ENCODE measurements at regions of chr16 and their contacts with region 1.

Region 1: DNA sequence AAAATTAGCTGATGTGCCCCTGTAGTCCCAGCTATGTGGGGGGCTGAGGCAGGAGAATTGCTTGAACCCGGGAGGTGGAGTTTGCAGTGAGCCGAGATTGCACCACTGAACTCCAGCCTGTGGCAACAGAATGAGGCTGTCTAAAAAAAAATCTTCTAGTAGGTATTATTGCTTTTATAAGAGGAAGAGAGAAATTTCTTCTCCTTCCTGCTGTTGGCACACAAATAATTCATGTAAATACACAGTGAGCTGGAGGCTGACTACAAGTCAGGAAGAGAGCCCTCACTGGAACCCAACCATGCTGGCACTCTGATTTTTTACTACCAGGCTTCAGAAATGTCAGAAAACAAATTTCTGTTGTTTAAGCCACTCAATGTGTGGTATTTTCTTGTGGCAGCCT is 6.7 kb downstream of the PRDM7 start:
- DNase-seq: no peak
- ATAC-seq: no peak
- H3K4me3 Mint-ChIP-seq: no peak overlapping the region
- H3K27ac Mint-ChIP-seq: no peak overlapping the region
- H3K4me1 Mint-ChIP-seq: no peaks in the 10 kb centered on the region
- H3K27me3 Mint-ChIP-seq: peaks cover 43% of the 10 kb centered on the region

Region 2: GRCh38 chr16:89880477-89881367 is 189.7 kb before region 1 on chr16:
- CTCF ChIA-PET with region 1: no interaction called
- DNase-seq: no peak
- ATAC-seq: no peak
- H3K4me3 Mint-ChIP-seq: no peak overlapping the region
- H3K27ac Mint-ChIP-seq: no peak overlapping the region
- H3K4me1 Mint-ChIP-seq: no peaks in the 10 kb centered on the region
- H3K27me3 Mint-ChIP-seq: no peaks in the 10 kb centered on the region

Region 3: GRCh38 chr16:90081606-90081970 is 11.1 kb after region 1 on chr16:
- CTCF ChIA-PET with region 1: interaction called, 20 read pairs
- DNase-seq: no peak
- ATAC-seq: no peak
- H3K4me3 Mint-ChIP-seq: peak overlapping the region; percentile 80
- H3K27ac Mint-ChIP-seq: no peak overlapping the region
- H3K4me1 Mint-ChIP-seq: peaks cover 16% of the 10 kb centered on the region
- H3K27me3 Mint-ChIP-seq: peaks cover 55% of the 10 kb centered on the region

Measured in activated CD8-positive, alpha-beta memory T cell treated with anti-CD3 and anti-CD28 coated beads, Interleukin-2, amount 10 ng/mL, durations not matched to agents 7 days and 5 days (primary cell).